Endothelial cell of umbilical vein (primary cell): ENCODE measurements at regions of chr16 and their contacts with region 1.

Region 1: DNA sequence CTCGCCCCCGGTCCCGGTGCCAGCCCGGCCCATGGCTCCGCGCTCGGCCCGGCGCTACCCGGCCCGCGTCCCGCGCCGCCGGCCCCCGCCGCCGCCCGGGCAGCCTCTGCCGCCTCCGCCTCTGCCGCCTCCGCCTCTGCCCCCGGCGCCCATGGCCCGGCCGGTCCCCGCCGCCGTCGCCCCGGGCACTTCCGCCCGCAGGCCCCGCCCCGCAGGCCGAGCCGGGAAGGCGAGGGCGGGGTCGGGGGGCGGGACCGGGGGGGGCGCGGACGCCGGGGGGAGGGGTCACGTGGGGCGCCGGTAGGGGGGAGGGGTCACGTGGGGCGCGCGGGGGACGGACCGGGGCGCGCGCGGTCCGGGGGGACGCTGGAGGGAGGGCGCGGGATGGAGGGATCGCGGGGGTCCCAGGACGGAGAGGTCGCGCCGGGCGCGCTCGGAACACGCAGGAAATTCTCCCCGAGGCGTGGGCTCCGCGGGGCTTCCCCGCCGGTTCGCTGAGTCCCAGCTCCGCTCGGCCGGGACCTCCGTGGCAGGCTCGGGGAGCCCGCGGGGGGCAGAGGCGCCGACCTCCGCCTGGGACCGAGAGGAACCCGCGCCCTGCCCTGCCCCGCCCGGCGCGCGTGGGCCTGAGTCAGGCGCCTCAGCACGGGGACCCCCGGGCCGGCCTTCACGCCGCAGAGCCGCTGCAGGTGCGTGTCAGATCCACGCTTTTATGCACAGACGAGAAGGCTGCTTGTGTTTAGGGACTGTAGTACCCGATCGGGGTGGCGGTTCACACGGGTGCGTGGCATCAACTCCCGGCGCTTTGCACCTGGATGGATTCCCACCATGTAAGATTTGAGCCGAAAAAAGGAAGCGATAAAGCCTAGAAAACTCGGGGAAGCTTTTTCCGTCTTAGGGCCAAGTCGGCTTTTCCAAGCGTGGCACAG is at the start of gene PGAP6:
- DNase-seq: peak; percentile 26
- H3K4me3 ChIP-seq: peak within 1 kb of the TSS; percentile 67 to 93 (median 83)
- H3K27ac ChIP-seq: no peak within 1 kb of the TSS
- H3K4me1 ChIP-seq: peaks cover 20% of the 10 kb centered on the region
- H3K27me3 ChIP-seq: no peaks in the 10 kb centered on the region
- CTCF ChIP-seq: no peak
- POLR2A ChIP-seq: no peak
- total RNA-seq, gene PGAP6: 88.1 and 89.8 TPM in 2 replicates

Region 2: DNA sequence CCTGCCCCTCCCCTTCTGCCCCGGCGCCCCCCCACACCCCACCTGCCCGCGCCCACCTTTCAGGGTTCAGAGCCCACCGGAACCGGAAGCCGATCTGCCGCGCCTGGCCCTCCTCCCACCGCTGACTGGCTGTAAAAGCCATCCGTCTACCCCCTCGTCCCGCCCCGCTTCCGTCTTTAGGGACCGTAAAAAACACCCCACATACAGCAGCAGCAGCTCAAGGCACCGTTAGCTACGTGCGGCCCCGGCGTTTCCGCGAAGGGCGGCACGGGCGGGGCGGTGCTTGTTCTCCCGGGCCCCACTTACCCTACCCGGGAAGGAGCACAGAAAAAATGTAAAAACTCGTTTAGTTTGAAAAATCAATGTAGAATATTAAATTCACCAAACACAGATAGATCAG is 11.6 kb before region 1 on chr16 and contains the start of gene MRPL28:
- CTCF ChIA-PET with region 1: interaction called, 4 read pairs
- POLR2A ChIA-PET with region 1: no interaction called
- dilution Hi-C with region 1: no loop called
- intact Hi-C with region 1: loop called (anchors 1 kb)
- DNase-seq: peak; percentile 96
- H3K4me3 ChIP-seq: peak within 1 kb of the TSS in 2 of 3 experiments; percentile 3 to 47
- H3K27ac ChIP-seq: no peak within 1 kb of the TSS
- H3K4me1 ChIP-seq: peaks cover 8% of the 10 kb centered on the region
- H3K27me3 ChIP-seq: no peaks in the 10 kb centered on the region
- CTCF ChIP-seq: no peak
- POLR2A ChIP-seq: peak; percentile 71
- total RNA-seq, gene MRPL28: 86.3 and 104 TPM in 2 replicates

Region 3: GRCh38 chr16:401468-402348 is 19.7 kb after region 1 on chr16 and contains the start of gene DECR2:
- CTCF ChIA-PET with region 1: interaction called, 8 read pairs
- POLR2A ChIA-PET with region 1: interaction called, 10 read pairs
- dilution Hi-C with region 1: no loop called
- intact Hi-C with region 1: loop called (anchors 1 kb)
- DNase-seq: peak; percentile 87
- H3K4me3 ChIP-seq: peak within 1 kb of the TSS; percentile 58 to 74 (median 63)
- H3K27ac ChIP-seq: peak within 1 kb of the TSS; percentile 45
- H3K4me1 ChIP-seq: peaks cover 11% of the 10 kb centered on the region
- H3K27me3 ChIP-seq: no peaks in the 10 kb centered on the region
- CTCF ChIP-seq: peak; percentile 38 to 60
- POLR2A ChIP-seq: peak; percentile 94
- total RNA-seq, gene DECR2: 23.1 and 28.3 TPM in 2 replicates